ENCODE measurements at regions of chr15 and their contacts with region 1.

Region 1: GRCh38 chr15:74906446-74907162 is at the start of gene FAM219B:
- DNase-seq: peak; percentile 87
- H3K4me3 Mint-ChIP-seq: peak within 1 kb of the TSS; percentile 95
- H3K27ac Mint-ChIP-seq: peak within 1 kb of the TSS; percentile 97
- H3K4me1 Mint-ChIP-seq: peaks cover 15% of the 10 kb centered on the region
- H3K27me3 Mint-ChIP-seq: no peaks in the 10 kb centered on the region
- CTCF ChIP-seq: no peak
- total RNA-seq, gene FAM219B: 62.9 and 68.4 TPM in 2 replicates

Region 2: GRCh38 chr15:74799856-74800547 is 106.6 kb before region 1 on chr15:
- CTCF ChIA-PET with region 1: interaction called, 12 read pairs
- POLR2A ChIA-PET with region 1: interaction called, 5 read pairs
- intact Hi-C with region 1: no loop called
- DNase-seq: peak; percentile 90
- H3K4me3 Mint-ChIP-seq: no peak overlapping the region
- H3K27ac Mint-ChIP-seq: peak overlapping the region; percentile 83
- H3K4me1 Mint-ChIP-seq: peaks cover 13% of the 10 kb centered on the region
- H3K27me3 Mint-ChIP-seq: no peaks in the 10 kb centered on the region
- CTCF ChIP-seq: peak; percentile 97

Region 3: DNA sequence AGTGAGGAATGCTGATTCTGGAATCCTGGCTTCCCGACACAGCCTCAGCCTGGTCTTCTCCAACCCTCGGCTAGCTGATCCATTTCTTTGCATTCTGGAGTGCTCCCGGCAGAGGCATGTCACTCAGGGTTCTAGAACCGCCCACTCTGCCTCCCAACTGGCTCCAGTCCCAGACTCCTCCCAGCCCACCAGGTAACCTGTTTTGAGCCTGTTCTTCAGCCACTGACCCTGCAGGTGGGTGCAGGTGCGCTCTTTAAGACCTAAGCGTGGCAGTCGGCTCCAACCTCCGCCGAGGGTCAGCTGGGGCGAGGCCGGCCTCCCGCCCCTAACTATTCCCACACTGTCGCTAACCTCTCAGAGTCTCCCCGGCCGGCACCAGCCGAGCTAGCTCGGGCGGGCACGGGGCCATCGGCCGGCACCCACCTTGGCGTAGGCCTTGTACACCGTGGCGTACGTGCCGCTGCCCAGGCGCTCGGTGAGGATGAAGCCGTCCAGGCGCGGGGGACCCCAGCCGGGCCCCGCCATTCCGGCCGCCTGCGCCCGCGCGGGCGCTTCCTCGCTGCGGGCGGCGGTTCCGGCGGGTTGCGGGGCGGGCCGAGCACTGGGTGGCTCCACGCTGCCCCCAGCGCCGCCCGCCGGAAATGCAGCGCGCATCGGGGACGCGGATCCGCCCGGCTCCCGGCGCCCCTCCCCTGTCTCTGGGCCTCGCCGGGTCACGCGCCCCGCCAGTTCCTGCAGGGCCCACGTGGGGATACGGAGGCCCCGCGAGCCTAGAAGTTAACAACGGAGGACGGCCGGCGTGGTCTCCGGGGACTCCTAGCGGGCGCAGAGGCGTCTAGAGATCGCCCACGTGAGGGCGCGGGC is 63.8 kb before region 1 on chr15 and contains the start of gene ULK3:
- CTCF ChIA-PET with region 1: interaction called, 10 read pairs
- POLR2A ChIA-PET with region 1: interaction called, 12 read pairs
- intact Hi-C with region 1: loop called (anchors 2 kb)
- DNase-seq: peak; percentile 89
- H3K4me3 Mint-ChIP-seq: peak within 1 kb of the TSS; percentile 83
- H3K27ac Mint-ChIP-seq: peak within 1 kb of the TSS; percentile 49
- H3K4me1 Mint-ChIP-seq: no peaks in the 10 kb centered on the region
- H3K27me3 Mint-ChIP-seq: no peaks in the 10 kb centered on the region
- CTCF ChIP-seq: peak; percentile 76
- total RNA-seq, gene ULK3: 27.6 and 31.3 TPM in 2 replicates

Region 4: GRCh38 chr15:74878273-74878672 is 28.3 kb before region 1 on chr15:
- CTCF ChIA-PET with region 1: interaction called, 13 read pairs
- POLR2A ChIA-PET with region 1: interaction called, 5 read pairs
- intact Hi-C with region 1: no loop called
- DNase-seq: no peak
- H3K4me3 Mint-ChIP-seq: no peak overlapping the region
- H3K27ac Mint-ChIP-seq: no peak overlapping the region
- H3K4me1 Mint-ChIP-seq: no peaks in the 10 kb centered on the region
- H3K27me3 Mint-ChIP-seq: no peaks in the 10 kb centered on the region
- CTCF ChIP-seq: no peak

Region 5: DNA sequence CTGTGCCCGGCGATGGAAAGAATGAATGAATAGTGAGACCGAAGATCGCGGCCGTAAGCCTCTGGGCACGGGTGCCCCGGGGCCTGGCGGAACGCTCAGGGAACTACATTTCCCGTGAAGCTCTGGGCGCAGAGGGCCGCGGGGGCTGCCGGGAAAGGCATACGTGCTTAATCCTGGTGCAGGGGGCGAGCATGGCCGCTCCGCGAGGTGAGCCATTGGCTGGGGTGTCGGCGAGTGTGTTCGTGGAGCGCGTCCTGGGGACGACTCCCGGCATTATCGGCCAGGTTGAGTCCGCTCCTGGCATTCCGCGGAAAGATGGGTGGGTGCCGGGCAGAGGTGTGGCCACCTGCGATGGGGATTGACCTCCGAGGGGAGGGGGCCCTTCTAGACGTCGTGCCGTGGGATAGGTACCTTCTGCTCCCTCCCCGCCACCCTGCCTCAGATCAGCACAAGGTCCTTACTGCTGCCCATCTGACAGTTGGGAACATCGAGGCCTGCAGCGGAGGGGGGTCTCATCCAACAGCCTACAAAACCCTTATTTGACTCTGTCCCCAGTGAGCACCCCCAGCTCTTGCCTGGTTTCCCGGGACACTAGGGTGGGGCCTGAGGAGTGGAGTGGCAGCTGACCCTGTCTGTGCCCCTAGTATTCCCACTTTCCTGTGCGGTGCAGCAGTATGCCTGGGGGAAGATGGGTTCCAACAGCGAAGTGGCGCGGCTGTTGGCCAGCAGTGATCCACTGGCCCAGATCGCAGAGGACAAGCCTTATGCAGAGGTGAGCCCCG is 16.5 kb before region 1 on chr15 and contains the start of gene MPI:
- CTCF ChIA-PET with region 1: interaction called, 38 read pairs
- POLR2A ChIA-PET with region 1: interaction called, 16 read pairs
- intact Hi-C with region 1: no loop called
- DNase-seq: peak; percentile 73
- H3K4me3 Mint-ChIP-seq: peak within 1 kb of the TSS; percentile 79
- H3K27ac Mint-ChIP-seq: peak within 1 kb of the TSS; percentile 11
- H3K4me1 Mint-ChIP-seq: peaks cover 25% of the 10 kb centered on the region
- H3K27me3 Mint-ChIP-seq: no peaks in the 10 kb centered on the region
- CTCF ChIP-seq: no peak
- total RNA-seq, gene MPI: 30.8 and 31.4 TPM in 2 replicates

Region 6: DNA sequence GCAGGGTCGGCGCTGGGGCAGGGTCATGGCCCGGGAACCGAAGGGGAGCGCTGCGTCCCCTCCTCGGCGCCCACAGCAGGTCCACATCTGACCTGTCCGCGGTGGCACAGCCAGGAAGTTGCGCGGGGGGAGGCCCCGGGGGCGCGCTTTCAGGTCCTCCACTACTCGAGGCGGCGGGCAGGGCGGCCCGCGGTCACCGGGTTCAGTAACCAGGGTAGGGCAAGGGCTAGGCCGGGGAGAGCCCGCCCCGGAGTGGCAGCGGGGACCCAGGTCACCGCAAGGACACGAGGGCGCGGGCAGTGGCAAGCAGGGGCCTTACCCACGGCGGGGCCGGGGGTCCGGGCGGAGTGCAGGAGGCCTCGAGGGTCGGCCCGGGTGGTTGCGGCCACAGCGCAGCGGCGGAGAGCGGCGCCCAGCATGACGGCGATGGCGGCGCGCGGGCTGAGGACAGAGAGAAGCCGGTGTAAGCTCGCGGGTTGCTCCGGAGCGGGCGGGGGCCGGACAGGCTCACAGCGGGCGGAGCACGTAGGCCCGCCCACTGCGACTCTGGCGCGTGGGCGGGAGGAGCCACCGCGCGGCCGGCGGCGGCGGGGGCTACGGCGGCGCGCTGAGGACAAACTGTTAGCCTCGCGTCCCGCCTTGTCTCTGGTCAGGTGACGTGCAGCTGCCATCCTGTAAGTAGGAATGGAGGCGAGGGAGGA is 31.1 kb after region 1 on chr15 and contains the start of gene COX5A:
- CTCF ChIA-PET with region 1: interaction called, 9 read pairs
- POLR2A ChIA-PET with region 1: interaction called, 14 read pairs
- intact Hi-C with region 1: no loop called
- DNase-seq: peak; percentile 95
- H3K4me3 Mint-ChIP-seq: peak within 1 kb of the TSS; percentile 86
- H3K27ac Mint-ChIP-seq: peak within 1 kb of the TSS; percentile 88
- H3K4me1 Mint-ChIP-seq: peaks cover 6% of the 10 kb centered on the region
- H3K27me3 Mint-ChIP-seq: no peaks in the 10 kb centered on the region
- CTCF ChIP-seq: no peak
- total RNA-seq, gene COX5A: 295 and 339 TPM in 2 replicates

Region 7: GRCh38 chr15:75161917-75162414 is 255.4 kb after region 1 on chr15:
- CTCF ChIA-PET with region 1: no interaction called
- POLR2A ChIA-PET with region 1: no interaction called
- intact Hi-C with region 1: no loop called
- DNase-seq: no peak
- H3K4me3 Mint-ChIP-seq: no peak overlapping the region
- H3K27ac Mint-ChIP-seq: no peak overlapping the region
- H3K4me1 Mint-ChIP-seq: no peaks in the 10 kb centered on the region
- H3K27me3 Mint-ChIP-seq: no peaks in the 10 kb centered on the region
- CTCF ChIP-seq: no peak

Region 8: GRCh38 chr15:75201609-75202250 is 295.1 kb after region 1 on chr15 and contains the start of gene C15orf39:
- CTCF ChIA-PET with region 1: no interaction called
- POLR2A ChIA-PET with region 1: interaction called, 10 read pairs
- intact Hi-C with region 1: no loop called
- DNase-seq: peak; percentile 67
- H3K4me3 Mint-ChIP-seq: peak within 1 kb of the TSS; percentile 91
- H3K27ac Mint-ChIP-seq: peak within 1 kb of the TSS; percentile 94
- H3K4me1 Mint-ChIP-seq: peaks cover 17% of the 10 kb centered on the region
- H3K27me3 Mint-ChIP-seq: no peaks in the 10 kb centered on the region
- CTCF ChIP-seq: peak; percentile 91
- total RNA-seq, gene C15orf39: 13.3 and 17.2 TPM in 2 replicates

Region 9: DNA sequence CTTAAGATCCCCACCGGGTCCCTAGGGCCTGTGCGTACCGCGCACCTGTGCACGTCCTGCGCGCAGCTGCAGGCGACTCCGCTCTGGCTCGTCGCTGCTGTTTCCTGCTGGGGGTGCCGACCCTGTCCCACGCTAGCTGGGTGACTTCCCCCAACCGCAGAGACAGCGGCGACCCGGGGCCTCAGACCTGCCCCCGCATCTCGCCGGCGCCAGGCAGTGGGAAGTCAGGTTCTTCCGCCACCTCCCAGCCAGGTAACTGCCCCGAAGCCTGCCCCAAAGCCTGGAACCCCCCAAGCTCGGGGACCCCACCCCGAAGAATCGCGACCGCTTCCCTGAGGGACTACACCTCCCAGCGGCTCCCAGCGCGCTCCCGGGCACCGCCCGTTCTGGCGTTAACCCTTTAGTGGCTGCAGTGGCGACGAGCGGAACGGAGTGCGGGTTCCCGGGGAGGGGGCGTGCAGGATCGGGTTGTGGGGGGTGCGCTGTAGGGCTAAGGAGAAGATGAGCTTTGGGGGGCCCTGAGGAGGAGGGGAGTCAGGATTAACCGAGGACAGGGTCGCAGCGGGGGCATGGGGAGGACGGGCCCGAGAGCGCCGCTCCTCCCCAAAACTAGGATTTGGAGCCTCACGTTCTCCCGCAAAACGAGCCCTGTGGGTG is 440.7 kb after region 1 on chr15:
- CTCF ChIA-PET with region 1: no interaction called
- POLR2A ChIA-PET with region 1: no interaction called
- intact Hi-C with region 1: no loop called
- DNase-seq: peak; percentile 36
- H3K4me3 Mint-ChIP-seq: peak overlapping the region; percentile 86
- H3K27ac Mint-ChIP-seq: peak overlapping the region; percentile 74
- H3K4me1 Mint-ChIP-seq: peaks cover 5% of the 10 kb centered on the region
- H3K27me3 Mint-ChIP-seq: no peaks in the 10 kb centered on the region
- CTCF ChIP-seq: no peak

Measured in MCF 10A (cell line).